Caco-2 (cell line): ENCODE measurements at regions of chr5 and their contacts with region 1.

Region 1: DNA sequence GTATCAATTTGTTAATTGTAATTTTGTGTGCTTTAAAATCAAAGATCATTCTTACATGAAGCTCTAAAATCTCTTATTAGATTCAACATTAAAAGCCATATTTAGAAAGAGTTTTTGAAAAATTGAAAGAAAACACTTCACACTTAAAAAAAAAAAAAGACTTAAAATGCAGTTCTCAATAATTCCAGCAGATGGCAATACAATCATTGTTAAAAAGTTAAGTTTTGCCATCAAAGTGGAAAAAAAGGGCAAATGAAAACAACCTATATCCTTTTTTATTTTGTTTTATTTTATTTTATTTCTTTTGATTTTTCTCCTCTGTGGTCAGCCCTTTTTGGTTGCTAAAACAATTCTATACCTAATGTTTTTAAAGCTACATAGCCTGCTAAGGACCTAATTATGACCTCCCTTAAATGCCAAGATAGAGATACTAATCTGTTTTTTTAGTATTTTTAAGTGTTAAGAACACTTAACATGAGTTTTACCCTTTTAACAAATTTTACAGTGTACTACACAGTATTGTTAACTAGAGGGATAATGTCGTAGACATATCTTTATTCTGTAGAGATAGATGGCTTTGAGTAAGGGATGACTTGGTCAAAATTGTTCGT is 154.2 kb upstream of the DAB2 start:
- DNase-seq: no peak
- H3K4me3 ChIP-seq: no peak overlapping the region
- H3K4me3 Mint-ChIP-seq: no peak overlapping the region
- H3K27ac Mint-ChIP-seq: peak overlapping the region; percentile 16
- H3K4me1 ChIP-seq: peaks cover 13% of the 10 kb centered on the region
- H3K4me1 Mint-ChIP-seq: peaks cover 13% of the 10 kb centered on the region
- H3K27me3 ChIP-seq: no peaks in the 10 kb centered on the region
- H3K27me3 Mint-ChIP-seq: no peaks in the 10 kb centered on the region
- CTCF ChIP-seq: peak; percentile 39 to 72

Region 2: DNA sequence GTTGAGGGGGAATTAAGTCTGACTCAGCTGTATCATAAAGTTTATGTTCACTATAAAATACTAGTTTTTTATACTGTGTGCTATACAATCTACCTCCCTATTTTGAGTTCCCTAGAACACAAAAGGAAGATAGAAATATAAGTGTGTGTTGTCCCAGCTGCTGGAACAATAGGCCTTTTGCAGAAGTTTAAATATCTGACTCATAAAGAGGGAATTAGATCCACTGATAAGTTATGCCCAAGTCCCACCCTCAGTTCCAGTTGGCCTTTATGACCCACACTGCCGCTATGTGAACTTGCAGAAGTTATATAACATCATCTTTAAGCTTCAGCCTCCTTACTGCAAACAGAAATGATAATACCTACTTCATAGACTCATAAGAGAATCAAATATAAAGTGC is 65.8 kb before region 1 on chr5:
- CTCF ChIA-PET with region 1: no interaction called
- POLR2A ChIA-PET with region 1: no interaction called
- intact Hi-C with region 1: no loop called
- DNase-seq: no peak
- H3K4me3 ChIP-seq: no peak overlapping the region
- H3K4me3 Mint-ChIP-seq: no peak overlapping the region
- H3K27ac Mint-ChIP-seq: no peak overlapping the region
- H3K4me1 ChIP-seq: peaks cover 18% of the 10 kb centered on the region; the same call in 1 of the 2 replicates
- H3K4me1 Mint-ChIP-seq: peaks cover 7% of the 10 kb centered on the region
- H3K27me3 ChIP-seq: no peaks in the 10 kb centered on the region
- H3K27me3 Mint-ChIP-seq: no peaks in the 10 kb centered on the region
- CTCF ChIP-seq: no peak

Region 3: DNA sequence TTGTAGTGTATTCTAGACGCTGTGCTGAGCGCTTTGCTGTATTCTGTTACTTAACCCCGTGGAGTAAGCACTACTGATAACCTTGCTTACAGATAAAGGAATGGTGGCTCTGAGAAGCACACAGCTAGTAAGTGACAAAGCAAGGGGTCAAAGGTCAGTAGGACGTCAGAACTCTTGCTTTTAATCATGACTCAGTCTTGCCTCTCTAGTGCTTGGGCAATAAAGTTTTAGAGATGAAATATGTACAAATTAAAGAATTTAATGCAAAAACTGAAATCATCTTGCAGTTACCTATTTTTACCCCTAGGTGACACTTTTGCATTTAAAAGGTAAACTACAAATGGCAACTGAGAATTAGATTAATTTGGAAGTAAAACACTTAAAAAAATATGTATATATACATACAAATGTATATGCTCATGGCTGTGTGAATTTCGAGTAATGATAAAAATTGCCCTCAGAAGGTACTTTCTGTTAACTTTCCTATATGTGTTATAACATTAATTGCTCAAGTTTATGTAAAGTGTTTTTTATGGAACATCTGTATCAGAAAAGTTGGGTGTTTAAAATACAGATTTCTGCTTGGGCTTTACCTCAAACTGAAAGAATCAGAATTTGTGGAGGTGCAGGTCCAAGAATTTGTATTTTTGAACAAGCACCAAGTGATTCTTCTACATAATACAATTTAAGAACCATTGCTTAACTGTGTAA is 20.9 kb after region 1 on chr5:
- CTCF ChIA-PET with region 1: no interaction called
- POLR2A ChIA-PET with region 1: no interaction called
- intact Hi-C with region 1: loop called (anchors 2 kb)
- DNase-seq: peak; percentile 56 to 65
- H3K4me3 ChIP-seq: no peak overlapping the region
- H3K4me3 Mint-ChIP-seq: no peak overlapping the region
- H3K27ac Mint-ChIP-seq: no peak overlapping the region
- H3K4me1 ChIP-seq: peaks cover 21% of the 10 kb centered on the region
- H3K4me1 Mint-ChIP-seq: no peaks in the 10 kb centered on the region
- H3K27me3 ChIP-seq: no peaks in the 10 kb centered on the region
- H3K27me3 Mint-ChIP-seq: no peaks in the 10 kb centered on the region
- CTCF ChIP-seq: peak; percentile 36 to 62

Region 4: DNA sequence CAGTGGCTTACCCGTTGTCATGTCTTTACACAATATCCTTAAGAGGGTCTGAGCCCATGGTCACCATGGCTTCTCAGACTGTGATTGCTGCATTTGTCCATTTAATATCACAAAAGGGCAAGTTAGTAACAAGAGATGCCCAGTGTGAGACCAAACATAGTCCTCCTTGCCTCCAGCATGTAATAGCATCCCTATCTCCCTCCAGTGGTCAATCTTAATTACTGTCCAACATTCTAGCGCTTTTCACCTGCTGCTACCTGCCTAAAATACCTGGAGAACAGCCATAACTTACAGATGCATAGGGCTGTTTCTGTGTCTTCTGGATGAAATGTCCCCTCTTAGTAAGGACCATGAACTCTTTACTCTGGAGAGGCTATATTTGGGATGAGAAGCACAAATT is 113.0 kb after region 1 on chr5:
- CTCF ChIA-PET with region 1: interaction called, 3 read pairs
- POLR2A ChIA-PET with region 1: no interaction called
- intact Hi-C with region 1: loop called (anchors 1 kb)
- DNase-seq: peak in 1 of 2 experiments; percentile 38
- H3K4me3 ChIP-seq: no peak overlapping the region
- H3K4me3 Mint-ChIP-seq: no peak overlapping the region
- H3K27ac Mint-ChIP-seq: no peak overlapping the region
- H3K4me1 ChIP-seq: no peaks in the 10 kb centered on the region
- H3K4me1 Mint-ChIP-seq: no peaks in the 10 kb centered on the region
- H3K27me3 ChIP-seq: no peaks in the 10 kb centered on the region
- H3K27me3 Mint-ChIP-seq: no peaks in the 10 kb centered on the region
- CTCF ChIP-seq: peak; percentile 42 to 46

Region 5: GRCh38 chr5:39714036-39714698 is 135.2 kb after region 1 on chr5:
- CTCF ChIA-PET with region 1: no interaction called
- POLR2A ChIA-PET with region 1: no interaction called
- intact Hi-C with region 1: loop called (anchors 2 kb)
- DNase-seq: peak; percentile 43 to 56
- H3K4me3 ChIP-seq: no peak overlapping the region
- H3K4me3 Mint-ChIP-seq: no peak overlapping the region
- H3K27ac Mint-ChIP-seq: no peak overlapping the region
- H3K4me1 ChIP-seq: no peaks in the 10 kb centered on the region
- H3K4me1 Mint-ChIP-seq: peaks cover 10% of the 10 kb centered on the region
- H3K27me3 ChIP-seq: no peaks in the 10 kb centered on the region
- H3K27me3 Mint-ChIP-seq: peaks cover 2% of the 10 kb centered on the region
- CTCF ChIP-seq: peak; percentile 67

Region 6: DNA sequence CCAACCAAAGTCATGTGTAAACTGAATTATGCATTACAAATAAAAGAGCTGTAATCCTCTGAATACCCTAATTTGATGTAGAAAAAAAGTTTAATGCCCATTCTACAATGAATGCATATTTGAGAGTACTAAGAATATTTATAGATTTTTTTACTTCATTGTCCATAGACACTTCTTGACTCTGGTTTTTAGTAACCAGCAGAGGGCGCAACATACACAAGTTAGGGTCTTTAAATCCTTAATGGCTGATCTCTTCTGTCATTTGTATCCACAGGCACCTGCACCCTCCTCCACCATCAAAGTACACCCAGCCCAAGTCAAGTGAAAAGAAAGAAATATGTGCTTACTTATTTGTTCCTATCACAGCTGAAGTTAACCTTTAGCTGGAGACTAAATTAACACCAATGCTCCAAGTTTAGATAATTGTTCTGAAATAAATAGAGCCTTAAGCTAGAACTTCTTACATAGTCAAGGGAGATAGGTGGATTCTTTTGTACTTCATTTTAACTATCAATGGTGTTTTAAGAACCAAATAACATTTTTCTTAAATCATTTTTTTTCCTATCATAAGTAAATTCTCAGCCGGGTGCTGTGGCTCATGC is 370.0 kb after region 1 on chr5:
- CTCF ChIA-PET with region 1: no interaction called
- POLR2A ChIA-PET with region 1: no interaction called
- intact Hi-C with region 1: loop called (anchors 5 kb)
- DNase-seq: peak; percentile 49 to 59
- H3K4me3 ChIP-seq: no peak overlapping the region
- H3K4me3 Mint-ChIP-seq: no peak overlapping the region
- H3K27ac Mint-ChIP-seq: no peak overlapping the region
- H3K4me1 ChIP-seq: 0 out of 2 replicates have a peak, but pooled peaks cover 5% of the 10 kb centered on the region
- H3K4me1 Mint-ChIP-seq: no peaks in the 10 kb centered on the region
- H3K27me3 ChIP-seq: no peaks in the 10 kb centered on the region
- H3K27me3 Mint-ChIP-seq: peaks cover 6% of the 10 kb centered on the region
- CTCF ChIP-seq: peak; percentile 70

Region 7: DNA sequence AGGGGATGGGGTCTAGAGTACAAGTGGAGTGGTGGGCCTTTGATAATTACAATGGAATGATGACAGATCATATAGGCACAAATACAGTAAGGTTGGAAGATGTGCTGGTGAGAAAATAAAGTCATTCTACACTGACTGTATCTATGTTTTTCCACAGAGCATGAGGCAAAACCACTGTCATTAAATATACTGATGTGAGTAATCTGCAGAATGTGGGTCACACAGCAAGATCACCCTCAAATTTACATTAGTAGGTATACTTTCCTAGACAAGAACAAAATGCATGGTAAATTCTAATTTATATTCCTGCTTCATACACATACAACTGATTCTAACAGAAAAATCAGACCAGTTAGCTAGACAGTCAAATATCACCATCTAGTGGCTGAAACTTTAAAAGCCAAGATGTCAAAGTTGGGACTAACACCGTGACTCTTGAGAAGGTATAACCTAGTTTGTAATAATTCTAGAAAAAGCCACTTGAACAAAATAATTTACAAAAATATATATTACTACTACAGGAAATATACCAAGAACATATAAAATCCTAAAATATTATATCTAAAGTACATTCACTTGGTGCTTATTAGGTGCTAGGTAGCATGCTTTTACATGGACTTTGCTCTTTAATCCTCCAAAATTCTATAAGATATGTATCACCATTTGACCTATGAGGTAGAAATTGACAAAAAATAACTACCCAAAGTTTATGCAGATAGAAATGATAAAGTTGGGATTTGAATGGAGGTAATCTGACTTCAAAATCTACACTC is 1157.3 kb after region 1 on chr5:
- CTCF ChIA-PET with region 1: no interaction called
- POLR2A ChIA-PET with region 1: no interaction called
- intact Hi-C with region 1: loop called (anchors 2 kb)
- DNase-seq: peak in 1 of 2 experiments; percentile 42
- H3K4me3 ChIP-seq: no peak overlapping the region
- H3K4me3 Mint-ChIP-seq: no peak overlapping the region
- H3K27ac Mint-ChIP-seq: no peak overlapping the region
- H3K4me1 ChIP-seq: peaks cover 23% of the 10 kb centered on the region
- H3K4me1 Mint-ChIP-seq: peaks cover 23% of the 10 kb centered on the region
- H3K27me3 ChIP-seq: no peaks in the 10 kb centered on the region
- H3K27me3 Mint-ChIP-seq: no peaks in the 10 kb centered on the region
- CTCF ChIP-seq: peak; percentile 65 to 72